Esophagus muscularis mucosa (tissue), 4 donors: ENCODE measurements at regions of chr10 and their contacts with region 1.

Region 1: GRCh38 chr10:68156373-68157185 is 47.3 kb downstream of the MYPN start:
- DNase-seq: no peak
- H3K4me3 ChIP-seq: no peak overlapping the region
- H3K27ac ChIP-seq: no peak overlapping the region
- H3K4me1 ChIP-seq: peaks cover 15 to 21% (median 17%) of the 10 kb centered on the region in 4 donors
- H3K27me3 ChIP-seq: no peaks in the 10 kb centered on the region
- CTCF ChIP-seq: peak; percentile 81 to 84 (median 83)
- EP300 ChIP-seq: no peak
- POLR2A ChIP-seq: no peak

Region 2: GRCh38 chr10:67297637-67298181 is 858.9 kb before region 1 on chr10:
- intact Hi-C with region 1: no loop called
- DNase-seq: no peak
- H3K4me3 ChIP-seq: no peak overlapping the region
- H3K27ac ChIP-seq: no peak overlapping the region
- H3K4me1 ChIP-seq: no peaks in the 10 kb centered on the region
- H3K27me3 ChIP-seq: no peaks in the 10 kb centered on the region
- CTCF ChIP-seq: no peak
- EP300 ChIP-seq: no peak
- POLR2A ChIP-seq: no peak

Region 3: DNA sequence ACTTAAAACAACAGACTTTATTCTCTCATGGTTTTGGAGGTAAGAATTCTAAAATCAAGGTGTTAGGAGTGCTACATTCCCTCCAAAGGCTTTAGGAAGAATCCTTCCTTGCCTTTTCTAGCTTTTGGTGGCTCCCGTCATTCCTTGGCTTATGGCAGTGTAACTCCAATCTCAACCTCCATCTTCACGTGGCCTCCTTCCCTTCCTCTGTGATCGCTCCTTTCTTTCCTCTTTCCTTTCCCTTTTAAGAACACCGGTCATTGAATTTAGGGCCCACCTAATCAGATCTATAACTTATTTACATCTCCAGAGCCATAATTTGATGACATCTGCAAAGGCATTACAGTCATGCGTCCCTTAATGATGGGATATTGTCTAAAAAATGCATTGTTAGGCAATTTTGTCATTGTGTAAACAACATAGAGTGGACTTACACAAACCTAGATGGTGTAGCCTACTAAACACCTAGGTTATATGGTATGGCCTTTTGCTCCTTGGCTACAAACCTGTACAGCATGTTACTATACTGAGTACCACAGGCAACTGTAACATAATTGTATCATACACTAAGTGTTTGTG is 75.6 kb before region 1 on chr10:
- intact Hi-C with region 1: loop called (anchors 2 kb)
- DNase-seq: no peak
- H3K4me3 ChIP-seq: no peak overlapping the region
- H3K27ac ChIP-seq: no peak overlapping the region
- H3K4me1 ChIP-seq: peaks cover 0 to 9% (median 0%) of the 10 kb centered on the region in 4 donors
- H3K27me3 ChIP-seq: no peaks in the 10 kb centered on the region
- CTCF ChIP-seq: no peak
- EP300 ChIP-seq: no peak
- POLR2A ChIP-seq: no peak